ENCODE measurements at regions of chr2 and their contacts with region 1.

Region 1: DNA sequence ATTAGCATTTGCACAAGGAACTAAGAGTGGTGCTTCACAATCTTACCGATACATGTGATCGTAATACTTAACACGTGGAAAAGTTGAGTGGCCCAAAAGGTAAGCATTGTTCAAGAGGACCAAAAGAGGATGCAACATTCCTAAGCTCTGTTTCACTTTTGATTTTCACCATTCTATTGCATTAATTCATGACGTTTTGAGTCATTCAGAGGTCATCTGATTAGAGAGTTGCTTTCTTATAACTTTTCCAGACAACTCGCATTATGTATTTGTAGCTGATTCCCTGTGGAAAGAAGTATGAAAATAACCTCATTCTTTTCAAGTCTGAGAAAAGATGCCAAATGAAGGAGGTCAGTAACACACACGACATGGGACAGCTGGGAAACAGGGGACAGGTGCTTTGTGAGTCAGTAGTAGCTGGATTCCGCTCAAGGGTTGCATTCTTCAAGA is 344.4 kb downstream of the RND3 start:
- DNase-seq: peak; percentile 85
- H3K4me3 ChIP-seq: no peak overlapping the region
- H3K27ac ChIP-seq: peak overlapping the region; percentile 99
- H3K4me1 ChIP-seq: peaks cover 48% of the 10 kb centered on the region
- H3K27me3 ChIP-seq: no peaks in the 10 kb centered on the region
- CTCF ChIP-seq: no peak
- POLR2A ChIP-seq: no peak

Region 2: DNA sequence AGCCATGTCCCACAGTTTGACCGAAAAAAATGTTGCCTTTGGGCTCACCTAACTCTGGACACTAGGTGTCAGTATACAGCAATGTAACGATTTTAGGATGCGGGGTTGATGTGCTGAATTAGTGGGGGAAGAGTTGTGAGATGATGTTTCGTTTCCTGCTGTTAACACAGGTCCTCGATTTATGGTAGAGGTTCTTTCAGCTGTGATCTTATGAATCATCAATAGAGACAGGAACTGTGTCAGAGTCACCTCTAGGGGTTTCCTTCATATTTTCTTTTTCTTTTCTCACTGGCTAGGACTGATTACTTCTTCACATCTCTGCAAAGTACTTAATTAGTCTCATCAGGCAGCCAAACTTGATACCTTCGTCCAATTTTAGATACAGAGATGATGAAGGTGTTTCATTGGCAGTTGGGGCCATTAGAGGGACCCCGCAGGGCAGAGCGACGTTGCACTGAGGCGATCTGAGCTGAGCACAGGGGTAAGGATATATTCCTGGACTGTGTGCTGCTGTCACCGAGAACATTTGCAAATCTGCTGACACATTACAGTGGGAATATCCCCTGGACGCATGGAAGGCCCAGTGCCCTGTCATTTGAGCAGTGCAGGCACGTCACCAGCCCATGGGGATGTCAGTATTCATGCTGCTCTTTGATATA is 545.3 kb before region 1 on chr2:
- CTCF ChIA-PET with region 1: interaction called, 8 read pairs
- POLR2A ChIA-PET with region 1: no interaction called
- dilution Hi-C with region 1: no loop called
- intact Hi-C with region 1: loop called (anchors 1 kb)
- DNase-seq: peak; percentile 87
- H3K4me3 ChIP-seq: peak overlapping the region in 1 of 3 experiments; percentile 30
- H3K27ac ChIP-seq: peak overlapping the region; percentile 81
- H3K4me1 ChIP-seq: peaks cover 7% of the 10 kb centered on the region
- H3K27me3 ChIP-seq: no peaks in the 10 kb centered on the region
- CTCF ChIP-seq: peak; percentile 60 to 91
- POLR2A ChIP-seq: no peak

Region 3: DNA sequence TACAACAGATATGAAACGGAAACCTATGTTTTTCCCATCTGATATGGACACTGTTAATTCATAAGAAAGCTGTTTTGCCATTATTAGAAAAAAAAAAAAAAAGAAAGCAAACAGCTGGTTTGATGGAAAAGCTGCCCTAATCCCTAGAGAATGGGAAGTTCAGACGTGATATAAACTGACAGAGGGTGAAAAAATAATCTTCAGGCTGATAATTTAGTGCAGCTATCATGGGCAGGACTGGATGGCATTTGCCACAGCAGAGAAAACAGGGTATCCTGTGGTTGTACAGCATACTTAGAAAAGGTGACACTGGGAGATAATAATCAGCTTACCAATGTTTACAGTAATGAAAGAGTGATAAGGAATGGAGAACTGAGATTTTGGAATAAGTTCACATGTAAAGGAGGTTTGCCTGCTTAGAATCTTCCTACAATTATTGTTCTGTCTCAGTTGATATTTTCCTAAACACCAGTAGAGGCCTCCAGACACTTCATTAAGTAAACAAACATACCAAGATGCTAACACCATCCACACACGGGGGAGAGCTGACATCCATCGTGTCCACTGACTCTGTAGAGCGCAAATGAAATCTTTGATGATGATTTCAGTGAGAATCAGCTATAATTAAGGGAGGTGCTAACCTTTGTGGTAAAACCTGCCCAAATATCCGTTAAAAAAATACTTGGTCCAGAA is 344.0 kb before region 1 on chr2:
- CTCF ChIA-PET with region 1: interaction called, 7 read pairs
- POLR2A ChIA-PET with region 1: no interaction called
- dilution Hi-C with region 1: no loop called
- intact Hi-C with region 1: loop called (anchors 1 kb)
- DNase-seq: peak; percentile 52
- H3K4me3 ChIP-seq: no peak overlapping the region
- H3K27ac ChIP-seq: no peak overlapping the region
- H3K4me1 ChIP-seq: peaks cover 6% of the 10 kb centered on the region
- H3K27me3 ChIP-seq: no peaks in the 10 kb centered on the region
- CTCF ChIP-seq: peak; percentile 15 to 34
- POLR2A ChIP-seq: no peak

Region 4: DNA sequence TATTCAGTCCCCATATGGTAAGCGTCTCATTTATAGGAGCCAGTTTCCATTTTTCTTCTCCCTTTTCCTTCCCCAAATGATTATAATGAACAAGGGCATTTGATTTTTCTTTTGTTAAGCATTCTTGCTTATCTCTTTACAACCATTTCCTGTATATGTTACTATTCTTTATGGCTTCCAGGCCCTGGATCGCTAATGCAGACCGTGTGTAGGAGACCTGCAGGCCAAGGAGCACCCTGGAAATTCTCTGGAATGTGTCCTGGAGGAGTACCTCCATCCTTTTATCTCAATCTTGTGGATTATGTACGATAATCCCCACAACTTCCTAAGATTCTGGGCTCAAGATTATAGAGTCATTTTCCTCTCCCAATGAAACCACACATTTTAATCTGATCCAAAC is 115.9 kb before region 1 on chr2:
- CTCF ChIA-PET with region 1: no interaction called
- POLR2A ChIA-PET with region 1: no interaction called
- dilution Hi-C with region 1: no loop called
- intact Hi-C with region 1: loop called (anchors 2 kb)
- DNase-seq: peak; percentile 82
- H3K4me3 ChIP-seq: no peak overlapping the region
- H3K27ac ChIP-seq: peak overlapping the region; percentile 28
- H3K4me1 ChIP-seq: peaks cover 21% of the 10 kb centered on the region
- H3K27me3 ChIP-seq: no peaks in the 10 kb centered on the region
- CTCF ChIP-seq: no peak
- POLR2A ChIP-seq: no peak

Region 5: GRCh38 chr2:150166313-150167051 is 23.4 kb after region 1 on chr2:
- CTCF ChIA-PET with region 1: interaction called, 7 read pairs
- POLR2A ChIA-PET with region 1: interaction called, 3 read pairs
- dilution Hi-C with region 1: no loop called
- intact Hi-C with region 1: loop called (anchors 2 kb)
- DNase-seq: peak; percentile 59
- H3K4me3 ChIP-seq: no peak overlapping the region
- H3K27ac ChIP-seq: peak overlapping the region; percentile 61
- H3K4me1 ChIP-seq: peaks cover 39% of the 10 kb centered on the region
- H3K27me3 ChIP-seq: no peaks in the 10 kb centered on the region
- CTCF ChIP-seq: no peak
- POLR2A ChIP-seq: no peak

Region 6: DNA sequence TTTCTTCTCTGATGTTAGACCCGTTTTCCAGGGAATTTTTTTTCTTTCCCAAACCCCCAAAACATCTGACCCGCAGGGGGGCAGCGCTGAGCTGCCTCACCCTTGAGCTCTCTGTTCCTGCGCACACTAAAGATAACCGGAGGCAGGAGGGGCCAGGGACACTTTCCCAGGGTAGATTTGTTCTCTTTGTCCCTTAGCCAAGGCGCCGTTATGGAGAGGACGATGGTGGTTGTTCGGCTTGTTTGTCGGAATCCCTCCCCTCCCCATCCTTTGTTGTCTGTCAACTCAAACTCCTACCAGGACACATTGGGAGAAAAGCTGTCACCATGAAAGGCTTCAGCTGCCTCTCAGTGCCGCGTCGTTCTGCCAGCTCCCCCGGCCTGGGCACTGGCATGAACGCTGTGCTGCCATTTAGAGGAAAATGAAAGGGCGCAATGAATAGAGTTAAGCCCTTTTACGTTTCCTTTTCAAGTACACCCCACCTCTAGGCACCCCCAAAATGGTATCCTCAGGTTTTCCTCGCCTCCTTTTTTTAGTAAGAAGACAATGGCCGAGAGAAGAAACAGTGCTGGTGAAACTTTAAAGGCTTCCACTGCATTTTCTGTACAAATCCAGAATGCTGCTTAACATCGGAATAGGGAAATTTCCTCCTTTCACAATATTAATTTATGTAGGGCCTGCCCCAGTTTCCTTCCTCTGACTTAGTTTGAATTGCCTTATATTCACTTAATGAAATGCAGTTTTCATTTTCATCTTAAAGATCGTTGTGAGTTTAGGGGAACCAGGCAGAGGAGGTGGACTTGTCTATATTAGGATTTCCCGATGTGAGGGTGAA is 282.2 kb after region 1 on chr2:
- CTCF ChIA-PET with region 1: interaction called, 8 read pairs
- POLR2A ChIA-PET with region 1: no interaction called
- dilution Hi-C with region 1: no loop called
- intact Hi-C with region 1: loop called (anchors 2 kb)
- DNase-seq: peak; percentile 76
- H3K4me3 ChIP-seq: peak overlapping the region in 2 of 3 experiments; percentile 30 to 55
- H3K27ac ChIP-seq: peak overlapping the region; percentile 77
- H3K4me1 ChIP-seq: peaks cover 17% of the 10 kb centered on the region
- H3K27me3 ChIP-seq: no peaks in the 10 kb centered on the region
- CTCF ChIP-seq: peak; percentile 47 to 49
- POLR2A ChIP-seq: peak; percentile 33

Region 7: GRCh38 chr2:150630587-150631235 is 487.6 kb after region 1 on chr2:
- CTCF ChIA-PET with region 1: no interaction called
- POLR2A ChIA-PET with region 1: no interaction called
- dilution Hi-C with region 1: no loop called
- intact Hi-C with region 1: no loop called
- DNase-seq: peak; percentile 17
- H3K4me3 ChIP-seq: no peak overlapping the region
- H3K27ac ChIP-seq: no peak overlapping the region
- H3K4me1 ChIP-seq: no peaks in the 10 kb centered on the region
- H3K27me3 ChIP-seq: no peaks in the 10 kb centered on the region
- CTCF ChIP-seq: no peak
- POLR2A ChIP-seq: no peak

Region 8: GRCh38 chr2:151051574-151052220 is 908.6 kb after region 1 on chr2:
- CTCF ChIA-PET with region 1: no interaction called
- POLR2A ChIA-PET with region 1: no interaction called
- dilution Hi-C with region 1: no loop called
- intact Hi-C with region 1: loop called (anchors 5 kb)
- DNase-seq: peak; percentile 69
- H3K4me3 ChIP-seq: no peak overlapping the region
- H3K27ac ChIP-seq: no peak overlapping the region
- H3K4me1 ChIP-seq: no peaks in the 10 kb centered on the region
- H3K27me3 ChIP-seq: no peaks in the 10 kb centered on the region
- CTCF ChIP-seq: peak; percentile 62 to 73
- POLR2A ChIP-seq: no peak